GM10248 (cell line): ENCODE measurements at regions of chr1 and their contacts with region 1.

Region 1: GRCh38 chr1:93680757-93681550 is 683 bp downstream of the BCAR3 start:
- DNase-seq: peak; percentile 83
- CTCF ChIP-seq: peak; percentile 41

Region 2: DNA sequence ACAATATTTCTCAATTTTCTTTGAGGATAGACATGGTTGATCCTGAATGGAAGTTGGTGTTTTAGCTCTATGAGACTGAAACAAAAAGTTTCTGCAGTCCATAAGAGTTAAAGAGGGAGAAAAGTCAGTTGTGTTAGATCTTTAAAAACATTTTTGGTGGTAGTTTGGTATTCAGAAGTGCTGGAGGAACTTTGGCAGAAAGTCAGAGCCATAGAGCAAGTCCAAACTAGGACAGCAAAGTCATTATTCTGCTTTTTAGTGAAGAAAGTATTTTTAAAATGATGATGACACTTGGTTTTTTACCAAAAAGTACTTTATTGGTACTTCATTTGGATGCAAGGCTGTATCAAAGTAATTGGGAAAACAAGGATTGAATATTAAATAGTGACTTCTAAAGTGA is 191.2 kb before region 1 on chr1:
- CTCF ChIA-PET with region 1: no interaction called
- POLR2A ChIA-PET with region 1: no interaction called
- DNase-seq: no peak
- CTCF ChIP-seq: no peak

Region 3: GRCh38 chr1:93605812-93606512 is 75.0 kb before region 1 on chr1:
- CTCF ChIA-PET with region 1: no interaction called
- POLR2A ChIA-PET with region 1: no interaction called
- DNase-seq: no peak
- CTCF ChIP-seq: no peak

Region 4: GRCh38 chr1:93661829-93662474 is 19.0 kb before region 1 on chr1:
- CTCF ChIA-PET with region 1: interaction called, 12 read pairs
- POLR2A ChIA-PET with region 1: no interaction called
- DNase-seq: no peak
- CTCF ChIP-seq: no peak

Region 5: GRCh38 chr1:93692983-93693591 is 12.1 kb after region 1 on chr1:
- CTCF ChIA-PET with region 1: interaction called, 20 read pairs
- POLR2A ChIA-PET with region 1: no interaction called
- DNase-seq: peak; percentile 62
- CTCF ChIP-seq: no peak